ENCODE measurements at regions of chr1 and their contacts with region 1.

Region 1: GRCh38 chr1:44721485-44722361 is 9.2 kb downstream of the RNU5D-1 start:
- DNase-seq: peak; percentile 98
- H3K4me3 Mint-ChIP-seq: peak overlapping the region; percentile 39
- H3K27ac Mint-ChIP-seq: peak overlapping the region; percentile 98
- H3K4me1 Mint-ChIP-seq: peaks cover 23% of the 10 kb centered on the region
- H3K27me3 Mint-ChIP-seq: no peaks in the 10 kb centered on the region
- CTCF ChIP-seq: no peak

Region 2: DNA sequence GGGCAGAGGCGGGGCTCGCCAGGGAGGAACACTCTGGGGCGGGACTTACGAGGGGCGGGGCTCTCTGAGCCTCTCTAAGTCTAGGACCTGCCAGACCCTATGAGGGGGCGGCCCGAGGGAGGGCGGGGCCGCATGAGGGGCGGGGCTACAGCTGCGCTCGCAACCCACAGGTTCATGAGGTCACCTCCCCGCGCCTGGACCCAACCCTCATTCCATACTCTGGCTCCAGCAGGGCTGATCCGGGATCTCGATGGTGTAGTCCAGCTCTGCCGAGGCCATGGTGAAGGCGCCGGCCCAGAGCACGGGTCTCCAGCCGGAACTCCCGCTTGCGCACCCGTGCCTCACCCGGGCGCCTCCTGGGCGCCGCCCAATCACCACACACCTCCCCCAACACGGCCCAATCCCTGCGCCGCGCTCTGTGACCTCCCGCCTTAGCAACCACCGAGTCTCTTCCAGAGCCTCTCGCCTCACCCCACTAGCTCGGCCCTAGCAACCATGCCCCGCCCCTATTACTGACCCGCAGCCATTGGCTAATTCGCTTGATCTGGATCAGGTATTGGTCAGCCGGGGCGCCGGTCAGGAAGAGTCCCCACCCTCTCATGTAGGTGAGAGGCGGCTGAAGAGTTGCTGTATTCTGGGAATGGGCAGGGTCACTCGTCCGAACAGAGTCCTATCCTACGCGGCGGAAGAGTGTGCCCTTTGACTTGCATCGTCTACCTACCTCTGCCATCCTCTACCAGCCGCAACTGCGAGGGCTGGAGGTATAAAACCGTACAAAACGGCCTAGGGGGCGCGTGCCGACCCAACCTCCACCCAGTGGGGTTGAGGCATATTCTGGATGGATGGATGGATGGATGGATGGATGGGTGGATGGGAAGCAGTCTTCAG is 47.4 kb before region 1 on chr1 and contains the starts of genes ARMH1 and TMEM53:
- CTCF ChIA-PET with region 1: interaction called, 6 read pairs
- POLR2A ChIA-PET with region 1: interaction called, 13 read pairs
- intact Hi-C with region 1: no loop called
- DNase-seq: peak; percentile 99
- H3K4me3 Mint-ChIP-seq: peak within 1 kb of the TSS; percentile 74
- H3K27ac Mint-ChIP-seq: peak within 1 kb of the TSS; percentile 96
- H3K4me1 Mint-ChIP-seq: peaks cover 17% of the 10 kb centered on the region
- H3K27me3 Mint-ChIP-seq: no peaks in the 10 kb centered on the region
- CTCF ChIP-seq: no peak
- total RNA-seq, gene ARMH1: 0.65 and 0.96 TPM in 2 replicates
- total RNA-seq, gene TMEM53: 2.2 TPM in 2 replicates

Region 3: GRCh38 chr1:44684525-44684924 is 37.2 kb before region 1 on chr1:
- CTCF ChIA-PET with region 1: no interaction called
- POLR2A ChIA-PET with region 1: no interaction called
- intact Hi-C with region 1: no loop called
- DNase-seq: no peak
- H3K4me3 Mint-ChIP-seq: no peak overlapping the region
- H3K27ac Mint-ChIP-seq: no peak overlapping the region
- H3K4me1 Mint-ChIP-seq: no peaks in the 10 kb centered on the region
- H3K27me3 Mint-ChIP-seq: no peaks in the 10 kb centered on the region
- CTCF ChIP-seq: no peak

Region 4: GRCh38 chr1:44707959-44708831 is 13.5 kb before region 1 on chr1:
- CTCF ChIA-PET with region 1: interaction called, 8 read pairs
- POLR2A ChIA-PET with region 1: interaction called, 14 read pairs
- intact Hi-C with region 1: no loop called
- DNase-seq: peak; percentile 75
- H3K4me3 Mint-ChIP-seq: no peak overlapping the region
- H3K27ac Mint-ChIP-seq: no peak overlapping the region
- H3K4me1 Mint-ChIP-seq: peaks cover 17% of the 10 kb centered on the region
- H3K27me3 Mint-ChIP-seq: peaks cover 14% of the 10 kb centered on the region
- CTCF ChIP-seq: peak; percentile 37

Region 5: GRCh38 chr1:44807262-44808062 is 85.7 kb after region 1 on chr1 and contains the start of gene DYNLT4:
- CTCF ChIA-PET with region 1: no interaction called
- POLR2A ChIA-PET with region 1: interaction called, 17 read pairs
- intact Hi-C with region 1: no loop called
- DNase-seq: peak; percentile 99
- H3K4me3 Mint-ChIP-seq: peak within 1 kb of the TSS; percentile 52
- H3K27ac Mint-ChIP-seq: peak within 1 kb of the TSS; percentile 100
- H3K4me1 Mint-ChIP-seq: peaks cover 48% of the 10 kb centered on the region
- H3K27me3 Mint-ChIP-seq: no peaks in the 10 kb centered on the region
- CTCF ChIP-seq: no peak
- total RNA-seq, gene DYNLT4: not detected in 2 replicates

Region 6: DNA sequence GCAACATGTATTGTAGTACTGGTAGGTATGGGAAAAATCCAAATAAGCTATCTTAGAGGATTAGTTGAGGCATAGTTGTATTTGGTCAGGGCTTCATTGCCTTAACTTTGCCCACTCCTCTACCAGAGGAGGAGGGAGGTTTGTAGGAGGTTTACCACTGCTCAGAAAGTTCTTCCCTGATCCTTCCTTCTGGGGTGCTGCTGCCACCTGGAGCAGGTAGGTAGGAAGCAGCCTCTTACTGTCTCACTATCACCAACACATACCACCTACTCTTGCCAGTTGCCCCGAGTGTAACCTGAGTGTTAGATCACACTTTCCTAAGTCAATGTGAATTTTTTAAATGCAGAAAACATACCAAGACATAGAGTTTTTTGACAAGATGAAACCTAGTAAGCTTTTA is 508.8 kb after region 1 on chr1:
- CTCF ChIA-PET with region 1: no interaction called
- POLR2A ChIA-PET with region 1: no interaction called
- intact Hi-C with region 1: no loop called
- DNase-seq: peak; percentile 50
- H3K4me3 Mint-ChIP-seq: no peak overlapping the region
- H3K27ac Mint-ChIP-seq: no peak overlapping the region
- H3K4me1 Mint-ChIP-seq: no peaks in the 10 kb centered on the region
- H3K27me3 Mint-ChIP-seq: no peaks in the 10 kb centered on the region
- CTCF ChIP-seq: no peak